Heart right ventricle (tissue), 16 donors: ENCODE measurements at regions of chrX and their contacts with region 1.

Region 1: DNA sequence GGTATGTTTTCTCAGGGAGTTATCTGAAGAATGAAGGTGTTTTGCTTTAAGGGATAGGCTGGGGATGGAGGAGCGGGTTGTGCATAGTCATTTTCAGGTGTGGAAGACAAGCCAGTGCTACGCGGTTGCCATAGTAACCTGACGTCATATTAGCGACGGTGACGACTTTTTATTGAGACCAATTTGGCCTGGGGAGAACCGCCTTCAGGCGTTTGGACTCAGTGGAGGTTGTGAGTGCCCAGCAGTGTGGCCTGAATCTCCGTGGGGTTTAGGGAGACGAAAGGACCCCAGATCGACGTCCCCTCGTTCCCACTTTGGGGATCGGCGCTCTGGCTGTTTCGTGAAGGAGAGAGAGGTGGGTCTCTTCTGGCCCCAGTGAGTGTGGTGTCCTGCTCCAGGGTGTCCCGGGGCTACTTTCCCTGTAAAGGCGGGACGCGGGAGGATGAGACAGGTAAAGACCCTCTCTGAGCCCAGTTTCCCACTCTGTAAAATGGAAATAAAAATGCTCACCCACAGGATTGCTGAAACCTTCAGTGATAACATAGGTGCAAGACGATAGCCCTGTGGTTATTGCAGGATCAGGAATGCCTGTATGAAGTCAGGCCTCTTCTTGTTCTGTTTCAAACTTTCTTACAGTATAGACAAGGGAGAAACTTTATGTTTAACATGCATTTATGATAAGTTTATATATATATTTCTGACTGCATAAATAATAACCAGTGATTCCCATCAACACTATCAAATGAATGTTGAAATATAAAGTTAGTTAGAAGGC is 48.6 kb downstream of the GPRASP3 start:
- DNase-seq: peak; percentile 24 to 80
- ATAC-seq: peak; percentile 87 to 96 (median 92)
- H3K4me3 ChIP-seq: peak overlapping the region; percentile 39 to 72 (median 62)
- H3K27ac ChIP-seq: peak overlapping the region in 5 of 10 donors; percentile 23 to 77 (median 48)
- H3K4me1 ChIP-seq: peaks cover 0 to 13% (median 8%) of the 10 kb centered on the region in 9 donors
- H3K27me3 ChIP-seq: no peaks in the 10 kb centered on the region
- CTCF ChIP-seq: no peak

Region 2: DNA sequence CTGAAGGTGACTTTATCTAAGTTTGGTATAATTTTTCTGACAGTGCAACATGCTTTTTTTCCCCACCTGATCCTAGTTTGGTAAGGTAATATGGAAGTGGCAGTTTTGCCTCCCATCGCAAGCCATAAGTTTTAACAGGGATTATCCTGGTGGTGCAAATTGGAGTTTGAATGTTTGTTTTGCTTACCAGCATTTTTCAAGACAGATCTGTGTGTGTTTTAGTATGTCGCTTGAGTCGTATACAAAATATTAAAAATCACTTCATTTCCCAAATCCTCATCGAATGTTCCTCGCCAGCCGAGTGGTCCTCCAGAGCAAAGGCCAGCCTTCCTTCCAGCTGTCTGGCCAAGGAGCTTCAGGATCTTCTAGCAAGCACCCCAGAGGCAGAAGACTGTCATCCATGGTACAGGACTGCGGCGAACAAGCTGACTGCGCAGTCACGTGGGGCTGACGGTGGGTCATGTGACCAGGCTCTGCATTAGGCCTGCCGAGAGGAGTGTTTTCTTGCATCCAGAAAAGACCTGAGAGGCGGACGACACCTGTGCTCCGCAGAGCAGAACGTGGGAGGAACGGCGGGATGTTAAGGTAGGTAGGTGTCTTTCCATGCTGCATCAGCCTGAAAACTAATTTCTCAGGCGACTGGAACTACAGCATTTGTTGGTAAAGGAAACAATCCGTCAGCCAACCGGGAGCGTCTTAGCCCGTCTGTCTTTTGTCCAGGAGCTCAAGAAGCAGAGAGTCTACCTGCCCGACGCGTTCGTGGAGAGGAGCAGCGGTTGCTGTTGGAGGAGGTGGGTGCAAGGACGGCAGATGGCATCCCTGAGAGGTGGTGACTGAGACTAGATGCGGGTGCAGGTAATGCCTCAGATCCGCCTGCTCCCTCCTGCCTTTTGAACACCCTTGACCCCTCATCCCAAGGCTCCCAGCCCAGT is 48.7 kb before region 1 on chrX and contains the start of gene GPRASP3:
- intact Hi-C with region 1: loop called in 2 of 10 experiments (anchors 5 to 10 kb)
- DNase-seq: peak; percentile 70 to 75
- ATAC-seq: peak; percentile 93 to 98 (median 97)
- H3K4me3 ChIP-seq: peak within 1 kb of the TSS; percentile 33 to 62 (median 54)
- H3K27ac ChIP-seq: peak within 1 kb of the TSS in 6 of 10 donors; percentile 27 to 63 (median 30)
- H3K4me1 ChIP-seq: peaks cover 0 to 9% (median 0%) of the 10 kb centered on the region in 9 donors
- H3K27me3 ChIP-seq: no peaks in the 10 kb centered on the region
- CTCF ChIP-seq: no peak
- total RNA-seq, gene GPRASP3: 4.6 to 10.1 (median 6.6) TPM